PC-9 (cell line): ENCODE measurements at regions of chrX and their contacts with region 1.

Region 1: DNA sequence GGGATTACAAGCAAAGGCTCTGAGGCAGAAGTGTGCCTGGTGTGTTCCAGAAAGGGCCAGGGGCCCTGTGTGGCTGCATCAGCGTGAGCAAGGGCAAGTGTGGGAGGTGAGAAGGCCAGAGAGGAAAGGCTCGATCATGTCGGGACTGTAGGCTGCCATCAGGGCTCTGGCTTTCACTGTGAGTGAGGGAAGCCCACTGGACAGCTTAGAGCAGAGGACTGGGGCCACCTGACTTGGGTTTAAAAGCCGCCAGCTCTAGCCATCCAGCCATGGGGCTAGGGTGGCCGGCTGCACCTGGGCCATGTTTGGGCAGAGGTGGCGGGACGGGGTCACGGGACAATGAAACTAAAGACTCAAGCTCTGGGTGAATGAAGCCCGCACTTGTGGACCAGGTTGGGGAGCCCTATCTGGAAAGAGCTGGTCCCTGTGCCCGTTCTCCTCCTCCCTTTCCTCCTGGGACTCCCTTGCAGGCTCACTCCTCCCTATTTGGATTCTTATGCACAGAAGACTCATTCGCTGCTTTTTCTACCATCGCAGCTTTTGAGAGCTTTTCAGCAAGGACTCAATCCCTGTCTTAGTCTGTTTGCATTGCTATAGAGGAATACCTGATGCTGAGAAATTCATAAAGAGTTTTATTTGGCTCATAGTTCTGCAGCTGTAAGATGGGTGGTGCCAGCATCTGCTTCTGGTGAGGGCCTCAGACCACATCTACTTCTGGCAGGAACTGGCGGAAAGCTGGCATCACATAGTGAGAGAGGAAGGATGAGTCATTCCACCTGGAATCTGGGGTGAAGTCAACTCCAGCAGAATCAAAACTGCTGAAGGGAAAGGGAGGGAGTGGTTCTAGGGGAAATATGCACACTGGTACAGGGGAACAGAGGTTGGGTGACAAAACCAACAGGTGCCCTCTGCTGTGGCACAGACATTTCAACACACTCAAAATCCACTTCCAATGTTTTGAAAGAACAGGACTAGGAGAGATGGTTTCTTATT is 15.3 kb downstream of the CTAG1B start:
- DNase-seq: peak; percentile 82 to 96
- H3K4me3 ChIP-seq: no peak overlapping the region
- H3K27ac ChIP-seq: peak overlapping the region; percentile 100
- H3K4me1 ChIP-seq: peaks cover 65% of the 10 kb centered on the region
- H3K27me3 ChIP-seq: no peaks in the 10 kb centered on the region
- CTCF ChIP-seq: no peak

Region 2: DNA sequence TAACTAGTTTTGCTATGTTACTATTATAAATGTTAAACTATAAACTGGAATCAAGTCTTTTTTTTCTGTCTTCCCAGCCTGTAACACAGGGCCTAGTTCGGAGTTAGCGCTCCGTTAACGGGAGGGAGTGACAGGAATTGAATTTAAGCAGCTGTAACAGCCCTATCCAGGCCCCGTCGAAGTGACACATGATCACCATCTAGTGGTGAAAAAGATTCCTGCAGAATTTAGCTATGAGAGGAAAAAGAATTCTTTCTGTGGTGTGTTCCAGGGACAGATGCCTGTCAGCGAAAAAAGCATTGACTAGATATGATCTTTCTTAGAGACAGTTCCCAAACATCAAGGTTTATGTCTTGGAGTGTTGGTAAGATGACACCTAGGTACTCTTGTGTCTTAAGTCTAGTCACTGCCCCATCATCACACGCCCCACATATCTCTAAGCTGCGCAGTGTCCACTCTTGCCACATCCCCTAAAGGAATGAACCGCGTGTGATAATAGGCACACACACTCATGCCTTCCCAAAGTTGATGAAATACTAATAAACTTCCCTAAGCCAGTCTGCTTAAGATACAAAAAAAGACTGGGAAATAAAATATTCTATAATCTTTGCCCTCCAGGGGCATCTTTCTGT is 145.1 kb after region 1 on chrX:
- CTCF ChIA-PET with region 1: no interaction called
- POLR2A ChIA-PET with region 1: no interaction called
- intact Hi-C with region 1: no loop called
- DNase-seq: peak in 1 of 2 experiments; percentile 47
- H3K4me3 ChIP-seq: no peak overlapping the region
- H3K27ac ChIP-seq: no peak overlapping the region
- H3K4me1 ChIP-seq: peaks cover 3% of the 10 kb centered on the region; the same call in 1 of the 2 replicates
- H3K27me3 ChIP-seq: peaks cover 26% of the 10 kb centered on the region
- CTCF ChIP-seq: peak; percentile 79

Region 3: GRCh38 chrX:154797006-154797405 is 193.3 kb after region 1 on chrX:
- CTCF ChIA-PET with region 1: no interaction called
- POLR2A ChIA-PET with region 1: interaction called, 12 read pairs
- intact Hi-C with region 1: no loop called
- DNase-seq: peak in 1 of 2 experiments; percentile 22
- H3K4me3 ChIP-seq: no peak overlapping the region
- H3K27ac ChIP-seq: no peak overlapping the region
- H3K4me1 ChIP-seq: peaks cover 38% of the 10 kb centered on the region
- H3K27me3 ChIP-seq: no peaks in the 10 kb centered on the region
- CTCF ChIP-seq: no peak